ENCODE measurements at regions of chr3 and their contacts with region 1.

Region 1: GRCh38 chr3:112642912-112643506 is 2.1 kb upstream of the CCDC80 start:
- DNase-seq: peak; percentile 70 to 87
- H3K4me3 ChIP-seq: no peak overlapping the region
- H3K27ac ChIP-seq: 0 out of 2 replicates have a peak overlapping the region, but pooled peaks have one; percentile 16
- H3K4me1 ChIP-seq: peaks cover 76% of the 10 kb centered on the region
- H3K27me3 ChIP-seq: no peaks in the 10 kb centered on the region
- CTCF ChIP-seq: peak; percentile 91

Region 2: DNA sequence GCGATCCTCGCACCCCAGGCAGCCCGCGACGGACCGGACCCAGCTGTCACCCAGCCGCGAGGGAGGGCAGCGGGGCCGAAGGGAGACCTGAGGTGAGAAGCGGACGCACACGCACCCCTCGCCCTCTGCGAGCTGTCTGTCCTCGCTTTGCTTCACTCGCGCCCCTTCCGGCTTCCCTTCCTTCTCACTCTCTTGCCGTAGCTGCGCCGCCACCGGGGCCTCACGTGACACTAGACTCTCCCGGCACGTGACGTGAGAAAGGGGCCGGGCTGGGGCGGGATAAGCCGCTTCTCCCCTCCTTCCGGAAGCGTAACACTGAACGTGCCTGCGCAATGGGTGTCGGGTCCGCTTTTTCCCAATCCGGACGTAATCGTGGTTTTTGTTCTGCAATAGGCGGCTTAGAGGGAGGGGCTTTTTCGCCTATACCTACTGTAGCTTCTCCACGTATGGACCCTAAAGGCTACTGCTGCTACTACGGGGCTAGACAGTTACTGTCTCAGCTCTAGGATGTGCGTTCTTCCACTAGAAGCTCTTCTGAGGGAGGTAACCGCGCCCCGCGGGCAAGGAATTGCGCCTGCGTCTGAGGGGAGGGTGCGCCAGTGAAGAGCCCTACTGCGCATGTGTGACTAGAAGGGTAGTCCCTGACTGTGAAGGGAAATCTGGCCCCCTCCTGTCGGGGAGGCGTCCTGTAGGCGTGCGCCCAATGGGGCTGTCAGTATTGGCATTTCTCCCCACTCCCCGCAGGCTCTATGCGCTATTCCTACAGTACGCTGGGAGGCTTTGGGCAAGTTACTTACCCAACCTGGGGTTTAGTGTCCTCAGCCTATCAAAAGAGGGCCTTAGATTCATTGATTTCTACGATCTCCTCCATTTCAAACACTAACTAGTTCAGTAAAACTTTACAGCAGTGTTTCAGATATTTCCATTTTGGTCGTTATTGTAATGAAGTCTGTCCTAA is 81.0 kb before region 1 on chr3 and contains the starts of genes ATG3 and SLC35A5:
- CTCF ChIA-PET with region 1: no interaction called
- POLR2A ChIA-PET with region 1: interaction called, 5 read pairs
- intact Hi-C with region 1: loop called (anchors 1 kb)
- DNase-seq: peak; percentile 94 to 99
- H3K4me3 ChIP-seq: peak within 1 kb of the TSS; percentile 93
- H3K27ac ChIP-seq: peak within 1 kb of the TSS; percentile 88
- H3K4me1 ChIP-seq: peaks cover 25% of the 10 kb centered on the region
- H3K27me3 ChIP-seq: no peaks in the 10 kb centered on the region
- CTCF ChIP-seq: peak; percentile 14; the same call in 1 of the 2 replicates
- total RNA-seq, gene ATG3: 66.8 and 68.9 TPM in 2 replicates
- total RNA-seq, gene SLC35A5: 24.2 and 35.7 TPM in 2 replicates

Region 3: GRCh38 chr3:112619295-112619694 is 23.7 kb before region 1 on chr3:
- CTCF ChIA-PET with region 1: interaction called, 16 read pairs
- POLR2A ChIA-PET with region 1: interaction called, 6 read pairs
- intact Hi-C with region 1: loop called (anchors 2 kb)
- DNase-seq: no peak
- H3K4me3 ChIP-seq: no peak overlapping the region
- H3K27ac ChIP-seq: peak overlapping the region; percentile 69
- H3K4me1 ChIP-seq: peaks cover 28% of the 10 kb centered on the region
- H3K27me3 ChIP-seq: no peaks in the 10 kb centered on the region
- CTCF ChIP-seq: no peak

Region 4: GRCh38 chr3:112681822-112682325 is 38.9 kb after region 1 on chr3:
- CTCF ChIA-PET with region 1: interaction called, 10 read pairs
- POLR2A ChIA-PET with region 1: interaction called, 12 read pairs
- intact Hi-C with region 1: no loop called
- DNase-seq: peak; percentile 31 to 45
- H3K4me3 ChIP-seq: no peak overlapping the region
- H3K27ac ChIP-seq: peak overlapping the region; percentile 52
- H3K4me1 ChIP-seq: peaks cover 27% of the 10 kb centered on the region
- H3K27me3 ChIP-seq: no peaks in the 10 kb centered on the region
- CTCF ChIP-seq: no peak

Region 5: DNA sequence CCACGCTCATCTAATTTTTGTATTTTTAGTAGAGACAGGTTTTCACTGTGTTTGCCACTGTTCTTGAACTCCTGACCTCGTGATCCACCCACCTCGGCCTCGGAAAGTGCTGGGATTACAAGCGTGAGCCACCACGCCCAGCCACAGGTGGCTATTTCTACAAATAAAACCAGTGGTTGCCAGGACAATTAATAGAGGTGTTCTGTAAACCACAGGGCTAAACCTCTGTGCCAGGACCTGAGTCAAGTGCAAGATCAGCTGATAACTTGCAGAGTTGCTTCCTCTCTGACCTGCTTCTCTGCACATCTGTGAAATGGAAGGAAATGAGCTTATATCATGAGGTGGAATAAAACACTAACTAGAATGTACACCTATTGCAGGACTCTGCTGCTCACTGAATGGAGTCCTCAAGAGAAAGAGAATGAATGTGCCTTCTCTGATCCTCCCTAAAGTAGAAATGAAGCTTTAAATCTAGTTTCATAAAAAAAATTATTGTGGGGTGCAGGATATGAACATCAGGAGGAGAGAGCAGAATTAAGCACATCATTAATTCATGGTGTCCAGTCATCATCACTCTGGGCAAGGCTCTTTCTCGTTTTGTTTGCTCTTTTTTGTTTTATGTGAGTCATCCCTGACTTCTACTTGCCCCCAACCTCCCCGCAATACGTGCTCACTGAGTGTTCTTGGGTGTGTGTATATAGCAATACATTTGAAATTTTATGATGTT is 131.0 kb after region 1 on chr3:
- CTCF ChIA-PET with region 1: interaction called, 5 read pairs
- POLR2A ChIA-PET with region 1: no interaction called
- intact Hi-C with region 1: loop called (anchors 1 kb)
- DNase-seq: peak; percentile 88 to 96
- H3K4me3 ChIP-seq: no peak overlapping the region
- H3K27ac ChIP-seq: peak overlapping the region; percentile 88
- H3K4me1 ChIP-seq: peaks cover 80% of the 10 kb centered on the region
- H3K27me3 ChIP-seq: no peaks in the 10 kb centered on the region
- CTCF ChIP-seq: no peak

Region 6: DNA sequence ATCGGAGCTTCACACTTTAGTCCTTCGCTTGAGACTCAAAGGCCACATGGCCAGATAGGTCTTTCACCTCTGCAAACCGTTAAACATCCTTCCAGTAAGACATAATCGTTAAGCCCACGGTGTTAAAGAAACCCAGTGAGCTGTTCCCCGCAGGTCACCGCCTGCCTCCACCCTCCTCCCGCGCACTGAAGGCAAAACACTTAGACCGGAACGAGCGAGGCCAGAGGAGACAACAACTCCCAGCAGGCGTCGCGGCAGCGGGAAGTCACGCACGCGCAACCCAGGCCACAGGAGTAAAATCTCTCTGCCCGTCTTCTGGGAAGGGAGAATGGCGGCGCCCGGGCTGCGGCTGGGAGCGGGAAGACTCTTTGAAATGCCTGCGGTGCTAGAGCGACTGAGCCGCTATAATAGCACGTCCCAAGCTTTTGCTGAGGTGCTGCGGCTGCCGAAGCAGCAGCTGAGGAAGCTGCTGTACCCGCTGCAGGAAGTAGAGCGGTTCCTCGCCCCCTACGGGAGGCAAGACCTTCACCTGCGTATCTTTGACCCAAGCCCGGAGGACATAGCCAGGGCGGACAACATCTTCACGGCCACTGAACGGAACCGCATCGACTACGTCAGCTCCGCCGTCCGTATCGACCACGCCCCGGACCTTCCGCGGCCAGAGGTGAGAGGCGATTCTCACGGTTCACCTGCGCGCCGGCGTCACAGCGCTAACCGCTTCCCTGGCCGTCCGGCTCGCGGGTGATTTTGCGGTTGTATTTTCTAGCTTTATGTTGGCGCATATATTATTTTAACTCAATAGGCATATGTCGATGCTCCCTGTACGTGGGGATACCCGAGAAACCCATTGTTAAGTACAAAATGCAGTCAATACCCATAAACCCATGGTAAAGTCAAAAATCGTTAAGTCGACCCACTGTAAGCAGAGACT is 347.9 kb after region 1 on chr3 and contains the start of gene GTPBP8:
- CTCF ChIA-PET with region 1: no interaction called
- POLR2A ChIA-PET with region 1: no interaction called
- intact Hi-C with region 1: loop called (anchors 1 kb)
- DNase-seq: peak; percentile 87 to 90
- H3K4me3 ChIP-seq: peak within 1 kb of the TSS; percentile 95
- H3K27ac ChIP-seq: peak within 1 kb of the TSS; percentile 98
- H3K4me1 ChIP-seq: peaks cover 29% of the 10 kb centered on the region
- H3K27me3 ChIP-seq: no peaks in the 10 kb centered on the region
- CTCF ChIP-seq: peak; percentile 25; the same call in 1 of the 2 replicates
- total RNA-seq, gene GTPBP8: 27.9 and 34.3 TPM in 2 replicates

Region 7: DNA sequence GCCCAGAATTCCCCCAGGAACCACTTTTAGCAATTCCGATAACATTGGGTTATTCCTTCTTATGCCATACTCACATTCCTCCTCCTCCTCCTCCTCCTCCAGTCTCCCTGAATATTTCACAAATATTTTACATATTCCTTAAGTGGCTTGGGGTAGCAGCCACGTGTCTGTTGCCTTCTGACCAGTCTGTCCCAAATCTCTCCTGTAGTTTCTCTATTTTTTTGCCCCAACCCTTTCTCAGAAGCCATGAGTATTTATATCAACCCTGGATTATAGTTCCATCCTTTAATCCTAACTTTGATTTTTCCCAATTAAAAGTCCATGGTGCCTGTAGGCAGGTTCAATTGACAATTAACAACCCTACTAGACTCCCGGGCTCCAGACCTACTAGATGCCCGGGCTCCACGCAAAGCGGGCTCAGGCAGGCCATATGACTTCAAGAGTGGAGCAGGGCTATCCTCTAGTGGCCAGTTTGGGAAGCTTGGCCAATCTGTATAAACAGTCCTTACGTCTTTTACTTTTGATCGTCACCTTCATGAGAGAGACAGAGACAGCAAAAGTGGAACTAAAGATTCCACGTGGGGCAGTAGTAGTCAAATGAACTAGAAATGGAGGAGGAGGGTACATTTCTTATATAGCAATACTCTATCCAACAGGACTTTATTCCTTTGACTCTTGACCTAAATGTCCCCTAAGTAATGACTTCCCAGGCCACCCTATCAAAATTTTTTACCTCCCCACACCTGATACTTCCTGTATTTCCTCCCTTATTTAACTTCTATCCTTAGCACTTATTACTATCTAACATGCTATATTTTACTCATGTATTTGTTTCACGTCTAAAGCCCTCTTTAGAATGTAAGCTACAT is 983.7 kb after region 1 on chr3:
- CTCF ChIA-PET with region 1: no interaction called
- POLR2A ChIA-PET with region 1: no interaction called
- intact Hi-C with region 1: loop called (anchors 5 kb)
- DNase-seq: peak; percentile 41
- H3K4me3 ChIP-seq: no peak overlapping the region
- H3K27ac ChIP-seq: no peak overlapping the region
- H3K4me1 ChIP-seq: 0 out of 2 replicates have a peak, but pooled peaks cover 4% of the 10 kb centered on the region
- H3K27me3 ChIP-seq: no peaks in the 10 kb centered on the region
- CTCF ChIP-seq: peak; percentile 86